ENCODE measurements at regions of chr2 and their contacts with region 1.

Region 1: GRCh38 chr2:9629222-9630000 is 1.4 kb downstream of the YWHAQ start:
- DNase-seq: peak; percentile 52
- H3K4me3 ChIP-seq: peak overlapping the region; percentile 88
- CTCF ChIP-seq: no peak

Region 2: DNA sequence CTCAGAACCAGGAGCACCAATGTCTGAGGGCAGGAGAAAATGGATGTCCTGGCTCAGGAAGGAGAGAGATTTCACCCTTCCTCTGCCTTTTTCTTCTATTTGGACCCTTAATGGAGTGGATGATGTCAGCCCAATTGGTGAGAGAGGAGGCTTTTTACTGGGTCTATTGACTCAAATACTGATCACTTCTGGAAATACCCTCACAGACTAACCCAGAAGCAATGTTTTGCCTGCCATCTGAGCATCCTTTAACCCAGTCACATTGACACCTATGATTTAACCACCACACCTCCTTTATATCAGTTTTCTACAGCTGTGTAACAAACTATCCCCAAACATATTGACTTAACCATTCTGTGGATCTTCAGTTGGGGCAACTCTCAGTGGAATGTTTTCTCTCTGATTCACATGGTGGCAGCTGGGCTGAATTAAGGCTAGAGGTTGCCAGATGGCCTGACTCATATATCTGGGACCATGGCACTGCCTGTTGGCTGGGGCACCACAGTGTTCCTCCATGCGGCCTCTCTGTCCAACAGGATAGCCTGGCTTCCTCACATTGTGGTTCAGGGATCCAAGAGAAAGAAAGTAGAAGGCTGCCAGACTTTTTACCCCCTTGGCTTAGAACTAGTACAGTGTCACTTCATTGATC is 607.7 kb before region 1 on chr2:
- in situ Hi-C with region 1: no loop called
- DNase-seq: no peak
- H3K4me3 ChIP-seq: no peak overlapping the region
- CTCF ChIP-seq: no peak

Region 3: GRCh38 chr2:9663008-9663879 is 33.8 kb after region 1 on chr2:
- in situ Hi-C with region 1: loop called (anchors 5 kb)
- DNase-seq: no peak
- H3K4me3 ChIP-seq: no peak overlapping the region
- CTCF ChIP-seq: no peak